ENCODE measurements at regions of chr3 and their contacts with region 1.

Region 1: GRCh38 chr3:156542715-156543555 is 12.0 kb downstream of the SSR3 start:
- DNase-seq: no peak
- H3K4me3 ChIP-seq: no peak overlapping the region
- H3K27ac ChIP-seq: no peak overlapping the region
- H3K4me1 ChIP-seq: no peaks in the 10 kb centered on the region
- H3K27me3 ChIP-seq: no peaks in the 10 kb centered on the region
- CTCF ChIP-seq: no peak
- EP300 ChIP-seq: no peak
- POLR2A ChIP-seq: no peak
- RAD21 ChIP-seq: no peak

Region 2: GRCh38 chr3:156649681-156650080 is 106.7 kb after region 1 on chr3:
- CTCF ChIA-PET with region 1: no interaction called
- POLR2A ChIA-PET with region 1: no interaction called
- DNase-seq: no peak
- H3K4me3 ChIP-seq: no peak overlapping the region
- H3K27ac ChIP-seq: no peak overlapping the region
- H3K4me1 ChIP-seq: no peaks in the 10 kb centered on the region
- H3K27me3 ChIP-seq: no peaks in the 10 kb centered on the region
- CTCF ChIP-seq: no peak
- EP300 ChIP-seq: no peak
- POLR2A ChIP-seq: no peak
- RAD21 ChIP-seq: no peak

Region 3: GRCh38 chr3:156674046-156674910 is 131.3 kb after region 1 on chr3 and contains the start of gene TIPARP:
- CTCF ChIA-PET with region 1: interaction called, 10 read pairs
- POLR2A ChIA-PET with region 1: interaction called, 3 read pairs
- DNase-seq: peak; percentile 82 to 95
- H3K4me3 ChIP-seq: peak within 1 kb of the TSS; percentile 32 to 91 (median 78)
- H3K27ac ChIP-seq: peak within 1 kb of the TSS; percentile 47; the same call in 1 of the 2 replicates
- H3K4me1 ChIP-seq: no peaks in the 10 kb centered on the region; a peak in 1 of 7 replicates
- H3K27me3 ChIP-seq: no peaks in the 10 kb centered on the region; a peak in 1 of 7 replicates
- CTCF ChIP-seq: peak; percentile 75 to 89 (median 83)
- EP300 ChIP-seq: peak; percentile 1 to 38; a peak in 2 of 3 replicates
- POLR2A ChIP-seq: peak; percentile 73 to 88
- RAD21 ChIP-seq: peak; percentile 75 to 80
- total RNA-seq, gene TIPARP: 5.5 and 5.8 TPM in 2 replicates

Measured in H1 (cell line).